ENCODE measurements at regions of chr22 and their contacts with region 1.

Region 1: DNA sequence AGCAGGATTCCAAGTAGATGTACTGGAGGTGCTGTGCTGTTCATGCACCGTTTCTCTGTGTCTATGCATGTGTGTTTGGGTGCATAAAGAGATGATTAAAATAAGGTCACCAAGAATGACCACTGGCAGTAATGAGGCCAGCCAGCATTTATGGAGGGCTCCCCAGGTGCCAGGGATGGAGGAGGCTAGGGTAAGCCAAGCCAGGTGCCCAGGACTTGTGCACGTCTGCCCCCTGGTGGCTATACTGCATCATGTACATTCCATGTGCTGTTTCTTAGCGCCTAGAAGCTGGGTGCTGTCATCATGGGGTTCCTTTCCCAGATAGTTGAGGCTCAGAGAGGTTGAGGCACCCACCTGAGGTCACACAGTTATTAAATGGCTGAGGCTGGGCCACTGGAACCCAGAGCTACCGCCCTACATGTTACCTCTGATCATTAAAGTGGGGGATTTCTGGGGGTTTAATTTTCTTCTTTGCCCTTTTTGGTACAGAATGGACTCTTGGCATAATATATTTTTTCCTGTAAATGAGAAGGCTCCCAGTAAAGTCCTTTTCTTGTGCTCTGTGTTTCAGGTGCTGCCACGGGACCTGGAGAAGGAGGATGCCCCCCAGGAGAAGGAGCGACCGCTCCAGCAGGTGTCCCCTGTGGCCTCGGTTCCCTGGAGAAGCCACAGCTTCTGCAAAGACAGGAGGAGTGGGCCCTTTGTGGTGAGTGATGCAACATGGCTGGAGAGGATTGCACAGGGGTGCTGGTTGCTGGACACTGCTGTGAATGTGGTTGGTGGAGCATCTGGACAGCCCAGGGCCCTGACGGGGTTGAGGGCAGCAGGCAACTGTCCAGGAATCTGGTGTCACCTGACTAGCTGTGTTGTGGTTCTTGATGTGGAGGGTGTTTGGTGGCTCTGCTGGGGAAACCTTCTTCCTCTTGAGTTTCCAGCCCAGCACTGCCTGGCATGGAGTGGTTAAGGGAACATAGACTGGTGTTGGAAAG is 96.4 kb downstream of the KIAA1671 start:
- DNase-seq: peak in 2 of 3 donors; percentile 74
- ATAC-seq: peak; percentile 70
- H3K4me3 ChIP-seq: no peak overlapping the region
- H3K4me1 ChIP-seq: peaks cover 15% of the 10 kb centered on the region
- CTCF ChIP-seq: peak; percentile 58

Region 2: DNA sequence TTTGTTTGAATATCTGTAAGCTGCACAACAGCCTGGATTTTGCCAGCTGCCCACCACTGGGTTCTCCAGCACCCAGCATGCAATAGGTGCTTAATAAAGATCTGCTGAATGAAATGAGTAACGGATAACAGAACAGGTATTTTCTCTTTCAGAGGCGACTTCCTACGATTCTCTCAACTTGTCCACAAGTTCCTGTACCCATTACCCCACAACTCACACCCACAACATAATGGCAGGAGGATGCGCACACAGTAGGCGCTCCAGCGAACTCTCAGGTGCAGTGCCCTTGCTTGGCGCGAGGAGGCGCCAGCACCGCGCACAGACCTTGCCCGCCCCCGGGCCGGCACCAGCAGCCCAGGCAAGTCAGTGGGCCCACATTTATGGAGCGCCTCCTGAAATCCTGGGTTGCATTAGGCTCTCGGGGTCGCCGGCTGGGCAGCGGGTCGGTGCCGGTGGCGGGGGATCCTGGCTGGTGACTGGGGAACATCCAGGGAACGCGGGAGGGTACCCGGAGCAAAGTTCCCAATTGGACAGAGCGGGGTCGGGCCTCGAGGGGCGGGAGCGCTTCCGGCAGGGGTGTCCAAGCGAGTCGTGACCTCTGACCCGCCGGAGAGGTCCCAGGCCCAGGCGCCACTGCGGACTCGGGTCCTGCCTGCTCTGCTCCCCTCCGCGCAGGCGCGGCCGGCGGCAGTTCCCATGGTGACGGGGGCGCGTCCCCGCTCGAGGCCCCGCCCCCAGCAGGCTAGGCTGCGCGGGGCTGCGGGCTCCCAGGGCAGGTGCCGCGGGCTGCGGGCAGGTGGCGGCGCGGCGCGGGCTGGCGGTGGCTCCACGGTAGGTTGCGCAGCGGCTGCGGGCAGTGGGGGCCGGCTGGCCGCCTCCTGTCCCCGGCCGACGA is 96.8 kb before region 1 on chr22 and contains the start of gene KIAA1671:
- intact Hi-C with region 1: loop called (anchors 5 kb)
- DNase-seq: peak; percentile 90 to 96 (median 90)
- ATAC-seq: peak; percentile 93
- H3K4me3 ChIP-seq: peak within 1 kb of the TSS; percentile 37
- H3K4me1 ChIP-seq: peaks cover 10% of the 10 kb centered on the region
- CTCF ChIP-seq: peak; percentile 94
- total RNA-seq, gene KIAA1671: 71.3 to 131 (median 88.9) TPM

Region 3: GRCh38 chr22:24977370-24978221 is 71.4 kb before region 1 on chr22:
- intact Hi-C with region 1: no loop called
- DNase-seq: peak; percentile 66 to 70 (median 67)
- ATAC-seq: peak; percentile 80
- H3K4me3 ChIP-seq: no peak overlapping the region
- H3K4me1 ChIP-seq: peaks cover 48% of the 10 kb centered on the region
- CTCF ChIP-seq: no peak

Measured in mucosa of descending colon (tissue), 3 donors.